ENCODE measurements at regions of chr1 and their contacts with region 1.

Region 1: GRCh38 chr1:51235673-51236530 is at the start of gene RNF11:
- DNase-seq: peak; percentile 97
- ATAC-seq: peak; percentile 93
- H3K4me3 Mint-ChIP-seq: peak within 1 kb of the TSS; percentile 79
- H3K27ac Mint-ChIP-seq: peak within 1 kb of the TSS; percentile 90
- H3K4me1 Mint-ChIP-seq: peaks cover 29% of the 10 kb centered on the region
- H3K27me3 Mint-ChIP-seq: no peaks in the 10 kb centered on the region
- total RNA-seq, gene RNF11: 20.6 to 26.0 TPM

Region 2: GRCh38 chr1:50959913-50960844 is 275.7 kb before region 1 on chr1 and contains the start of gene FAF1:
- CTCF ChIA-PET with region 1: no interaction called
- POLR2A ChIA-PET with region 1: interaction called, 3 read pairs
- intact Hi-C with region 1: loop called (anchors 2 to 5 kb)
- DNase-seq: peak; percentile 98
- ATAC-seq: peak; percentile 91
- H3K4me3 Mint-ChIP-seq: peak within 1 kb of the TSS; percentile 80
- H3K27ac Mint-ChIP-seq: peak within 1 kb of the TSS; percentile 96
- H3K4me1 Mint-ChIP-seq: peaks cover 24% of the 10 kb centered on the region
- H3K27me3 Mint-ChIP-seq: no peaks in the 10 kb centered on the region
- total RNA-seq, gene FAF1: 64.5 to 73.1 TPM

Region 3: DNA sequence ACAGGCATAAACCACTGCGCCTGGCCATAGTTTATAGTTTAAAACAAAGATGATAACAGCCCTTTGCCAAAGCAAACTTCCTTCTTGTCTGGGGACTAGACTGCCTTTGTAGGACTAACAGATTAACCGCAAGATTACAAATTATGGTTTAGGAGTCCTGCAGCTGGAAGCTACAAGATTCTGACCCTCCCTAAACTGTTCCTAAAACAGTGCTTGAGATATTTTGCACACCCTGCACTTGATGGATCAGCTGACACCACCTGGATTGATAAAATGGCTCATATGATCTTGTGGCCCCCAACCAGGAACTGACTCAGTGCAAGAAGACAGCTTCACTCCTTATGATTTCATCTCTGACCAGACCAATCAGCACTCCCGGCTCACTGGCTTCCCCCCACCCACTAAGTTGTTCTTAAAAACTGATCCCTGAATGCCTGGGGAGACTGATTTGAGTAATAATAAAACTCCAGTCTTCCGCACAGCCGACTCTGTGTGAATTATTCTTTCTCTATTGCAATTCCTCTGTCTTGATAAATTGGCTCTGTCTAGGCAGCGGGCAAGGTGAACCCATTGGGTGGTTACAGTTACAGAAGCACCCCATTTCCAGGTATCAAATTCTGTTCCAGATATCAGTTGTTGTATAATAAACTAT is 13.6 kb before region 1 on chr1:
- CTCF ChIA-PET with region 1: no interaction called
- POLR2A ChIA-PET with region 1: no interaction called
- intact Hi-C with region 1: no loop called
- DNase-seq: peak; percentile 17
- ATAC-seq: no peak
- H3K4me3 Mint-ChIP-seq: no peak overlapping the region
- H3K27ac Mint-ChIP-seq: no peak overlapping the region
- H3K4me1 Mint-ChIP-seq: peaks cover 9% of the 10 kb centered on the region
- H3K27me3 Mint-ChIP-seq: peaks cover 3% of the 10 kb centered on the region